ENCODE measurements at regions of chr16 and their contacts with region 1.

Region 1: GRCh38 chr16:67546761-67547422 is 15.4 kb upstream of the CTCF start:
- DNase-seq: peak; percentile 67 to 78 (median 76)
- H3K4me3 ChIP-seq: no peak overlapping the region
- H3K4me3 Mint-ChIP-seq: no peak overlapping the region
- H3K27ac ChIP-seq: peak overlapping the region; percentile 8 to 61
- H3K27ac Mint-ChIP-seq: peak overlapping the region; percentile 22 to 90 (median 83)
- H3K4me1 ChIP-seq: peaks cover 21 to 33% of the 10 kb centered on the region in 2 donors
- H3K4me1 Mint-ChIP-seq: peaks cover 34% of the 10 kb centered on the region
- H3K27me3 ChIP-seq: no peaks in the 10 kb centered on the region
- H3K27me3 Mint-ChIP-seq: peaks cover 0 to 3% (median 1%) of the 10 kb centered on the region in 3 donors
- CTCF ChIP-seq: peak; percentile 98

Region 2: DNA sequence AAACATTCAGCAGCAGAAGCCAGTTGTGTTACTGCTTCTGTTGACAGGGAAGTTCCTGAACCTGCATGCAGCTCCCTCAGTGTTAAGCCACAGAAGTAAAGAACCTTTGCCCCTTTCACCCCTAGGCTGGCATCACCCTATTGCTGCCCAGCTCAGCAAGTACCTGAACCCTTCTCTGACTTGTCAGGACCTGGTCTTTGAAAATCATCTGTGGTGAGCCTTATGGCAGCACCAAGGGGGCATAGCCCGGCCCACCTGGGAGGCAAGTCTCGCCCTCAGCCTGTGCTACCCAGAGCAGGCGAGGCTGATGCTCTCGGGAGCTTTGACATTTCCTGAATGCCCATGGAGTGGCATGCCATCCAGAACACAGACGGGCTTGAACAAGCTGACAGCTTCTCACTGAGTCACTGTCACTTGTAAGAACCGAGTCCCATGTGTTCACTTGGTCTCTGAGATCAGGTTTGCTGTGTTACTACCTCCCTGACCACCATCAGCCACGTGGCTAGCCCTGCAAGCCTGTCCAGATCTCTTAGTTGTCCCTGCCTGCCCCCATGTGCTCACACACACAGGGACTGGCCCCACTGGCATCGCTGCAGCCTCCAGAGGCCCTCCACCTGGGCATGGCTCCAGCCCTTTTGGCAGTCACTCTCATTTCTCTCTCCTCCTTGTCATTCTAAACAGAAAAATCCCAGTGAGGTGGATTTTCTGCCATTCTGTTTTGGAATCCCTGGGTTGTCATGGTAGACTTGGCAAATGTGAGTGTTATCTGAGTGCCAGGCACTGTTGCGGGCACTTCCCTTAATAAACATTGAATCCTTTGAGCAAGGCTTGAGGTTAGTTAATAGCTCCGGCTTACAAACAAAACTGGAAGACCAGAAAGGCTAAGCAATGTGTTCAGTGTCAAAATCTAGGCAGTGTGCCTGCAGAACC is 95.2 kb after region 1 on chr16:
- intact Hi-C with region 1: loop called (anchors 2 to 5 kb)
- DNase-seq: no peak
- H3K4me3 ChIP-seq: no peak overlapping the region
- H3K4me3 Mint-ChIP-seq: no peak overlapping the region
- H3K27ac ChIP-seq: no peak overlapping the region
- H3K27ac Mint-ChIP-seq: peak overlapping the region in 2 of 7 donors; percentile 25 to 58
- H3K4me1 ChIP-seq: peaks cover 5 to 10% of the 10 kb centered on the region in 2 donors
- H3K4me1 Mint-ChIP-seq: peaks cover 5% of the 10 kb centered on the region
- H3K27me3 ChIP-seq: peaks cover 2 to 19% of the 10 kb centered on the region in 2 donors
- H3K27me3 Mint-ChIP-seq: peaks cover 9 to 22% (median 20%) of the 10 kb centered on the region in 3 donors
- CTCF ChIP-seq: no peak

Region 3: GRCh38 chr16:67660564-67661028 is 113.7 kb after region 1 on chr16 and contains the start of gene PARD6A:
- intact Hi-C with region 1: loop called in 1 of 2 experiments (anchors 5 kb)
- DNase-seq: peak; percentile 95 to 96 (median 96)
- H3K4me3 ChIP-seq: peak within 1 kb of the TSS; percentile 74 to 92 (median 92)
- H3K4me3 Mint-ChIP-seq: peak within 1 kb of the TSS; percentile 90 to 92
- H3K27ac ChIP-seq: peak within 1 kb of the TSS; percentile 87 to 94
- H3K27ac Mint-ChIP-seq: peak within 1 kb of the TSS; percentile 96 to 99 (median 98)
- H3K4me1 ChIP-seq: peaks cover 20 to 30% of the 10 kb centered on the region in 2 donors
- H3K4me1 Mint-ChIP-seq: peaks cover 21% of the 10 kb centered on the region
- H3K27me3 ChIP-seq: peaks cover 0 to 5% of the 10 kb centered on the region in 2 donors
- H3K27me3 Mint-ChIP-seq: peaks cover 8 to 11% (median 10%) of the 10 kb centered on the region in 3 donors
- CTCF ChIP-seq: no peak
- polyA plus RNA-seq, gene PARD6A: 2.7 to 6.9 (median 6.1) TPM